Prostate gland (tissue), 2 donors: ENCODE measurements at regions of chr17 and their contacts with region 1.

Region 1: DNA sequence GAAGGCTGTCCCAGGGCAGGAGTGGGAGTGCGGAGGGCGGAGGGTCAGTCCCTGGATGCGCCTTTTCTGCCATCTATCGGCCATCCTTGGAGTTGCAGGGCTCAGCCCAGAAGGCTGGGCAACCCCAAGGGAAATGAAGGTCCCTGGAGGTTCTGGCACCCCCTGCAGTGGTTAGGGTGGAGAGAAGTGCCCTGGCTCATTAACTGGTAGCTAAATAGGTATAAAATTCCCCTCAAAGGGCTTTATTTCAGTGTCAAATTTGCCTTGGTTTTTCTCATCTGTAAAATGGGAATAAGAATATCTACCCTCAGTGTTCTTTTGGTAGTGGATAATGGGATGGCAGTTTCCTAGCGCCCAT is 22.4 kb downstream of the C17orf75 start:
- DNase-seq: peak; percentile 64
- H3K4me3 ChIP-seq: no peak overlapping the region
- H3K27ac ChIP-seq: no peak overlapping the region
- H3K4me1 ChIP-seq: no peaks in the 10 kb centered on the region
- H3K27me3 ChIP-seq: no peaks in the 10 kb centered on the region
- CTCF ChIP-seq: peak; percentile 70 to 95 (median 85)
- POLR2A ChIP-seq: no peak

Region 2: GRCh38 chr17:32206861-32207260 is 112.7 kb before region 1 on chr17:
- intact Hi-C with region 1: no loop called
- DNase-seq: no peak
- H3K4me3 ChIP-seq: no peak overlapping the region
- H3K27ac ChIP-seq: no peak overlapping the region
- H3K4me1 ChIP-seq: no peaks in the 10 kb centered on the region
- H3K27me3 ChIP-seq: no peaks in the 10 kb centered on the region
- CTCF ChIP-seq: no peak
- POLR2A ChIP-seq: no peak

Region 3: DNA sequence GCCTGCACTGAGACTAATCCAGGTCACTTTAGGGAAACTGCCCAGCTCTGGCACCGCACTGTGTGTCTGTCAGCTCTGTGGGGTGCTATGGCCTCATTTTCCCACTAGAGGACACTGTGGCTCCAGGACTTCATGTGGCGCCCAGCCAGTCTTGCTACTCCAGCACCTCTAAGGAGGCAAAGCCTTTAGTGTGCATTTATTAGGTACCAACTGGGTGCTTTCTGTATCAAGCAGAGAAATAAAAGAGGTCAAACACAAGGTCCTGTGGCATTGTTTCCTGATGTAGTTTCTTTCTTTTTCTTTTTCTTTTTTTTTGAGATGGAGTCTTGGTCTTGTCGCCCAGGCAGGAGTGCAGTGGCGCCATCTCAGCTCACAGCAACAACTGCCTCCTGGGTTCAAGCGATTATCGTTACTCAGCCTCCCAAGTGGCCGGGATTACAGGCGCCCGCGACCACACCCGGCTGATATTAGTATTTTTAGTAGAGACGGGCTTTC is 66.4 kb before region 1 on chr17:
- intact Hi-C with region 1: loop called (anchors 1 kb)
- DNase-seq: peak; percentile 81
- H3K4me3 ChIP-seq: no peak overlapping the region
- H3K27ac ChIP-seq: no peak overlapping the region
- H3K4me1 ChIP-seq: no peaks in the 10 kb centered on the region
- H3K27me3 ChIP-seq: no peaks in the 10 kb centered on the region
- CTCF ChIP-seq: peak; percentile 68 to 93 (median 83)
- POLR2A ChIP-seq: no peak